Panc1 (cell line): ENCODE measurements at regions of chr17 and their contacts with region 1.

Region 1: DNA sequence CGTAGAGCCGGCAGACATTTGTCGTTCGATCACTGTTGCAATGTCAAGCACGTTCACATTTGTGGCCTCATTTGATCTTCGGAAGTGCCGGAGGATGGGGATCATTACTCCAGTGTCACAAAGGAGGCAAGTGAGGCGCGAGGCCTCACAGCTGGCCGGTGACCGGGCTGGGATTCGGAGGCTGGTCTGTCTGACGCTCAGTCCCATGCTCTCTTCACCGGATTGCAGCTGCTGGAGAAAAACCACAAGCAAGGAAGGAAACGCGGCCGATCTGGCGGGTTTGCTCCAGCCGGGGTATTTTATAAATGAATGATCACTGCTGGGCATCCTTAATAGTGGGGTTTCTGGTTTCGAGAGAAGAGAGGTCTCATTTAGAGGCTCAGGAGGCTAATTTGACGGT is 127.8 kb downstream of the OR1D5 start:
- DNase-seq: no peak
- ATAC-seq: no peak
- H3K4me3 ChIP-seq: no peak overlapping the region
- H3K27ac ChIP-seq: no peak overlapping the region
- H3K4me1 ChIP-seq: no peaks in the 10 kb centered on the region
- H3K27me3 ChIP-seq: no peaks in the 10 kb centered on the region
- CTCF ChIP-seq: no peak

Region 2: DNA sequence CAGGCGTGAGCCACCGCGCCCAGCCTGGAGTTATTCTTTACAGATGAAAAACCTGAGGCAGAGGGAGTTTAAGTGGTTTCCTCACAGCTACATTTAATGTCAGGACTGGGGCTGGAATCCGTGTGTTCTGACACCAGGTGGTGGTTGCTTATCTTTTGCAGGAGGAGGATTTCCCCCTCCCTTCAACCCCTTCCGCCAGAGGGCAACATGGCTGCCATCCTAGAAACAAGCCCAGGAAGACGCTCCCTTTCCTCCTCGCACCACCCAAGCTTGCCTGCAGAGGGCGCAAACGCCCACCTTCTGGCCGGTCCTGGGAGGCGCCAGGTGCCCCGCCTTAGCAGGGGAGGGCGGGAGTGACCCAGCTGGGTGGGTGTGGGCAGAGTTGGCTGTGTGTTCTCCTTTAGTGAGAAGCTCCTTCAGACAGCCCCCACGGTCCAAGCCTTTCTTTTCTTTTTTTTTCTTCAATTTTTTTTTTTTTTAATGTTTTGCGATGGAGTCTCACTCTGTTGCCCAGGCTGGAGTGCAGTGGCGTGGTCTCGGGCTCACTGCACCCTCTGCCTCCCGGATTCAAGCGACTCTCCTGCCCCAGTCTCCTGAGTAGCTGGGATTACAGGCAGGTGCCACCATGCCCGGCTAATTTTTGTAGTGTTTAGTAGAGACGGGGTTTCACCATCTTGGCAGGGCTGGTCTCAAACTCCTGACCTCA is 149.3 kb before region 1 on chr17:
- CTCF ChIA-PET with region 1: no interaction called
- POLR2A ChIA-PET with region 1: no interaction called
- in situ Hi-C with region 1: no loop called
- intact Hi-C with region 1: no loop called
- DNase-seq: peak; percentile 85
- ATAC-seq: peak; percentile 97
- H3K4me3 ChIP-seq: peak overlapping the region in 1 of 2 experiments; percentile 6; a peak in 1 of 4 replicates
- H3K27ac ChIP-seq: no peak overlapping the region
- H3K4me1 ChIP-seq: no peaks in the 10 kb centered on the region
- H3K27me3 ChIP-seq: no peaks in the 10 kb centered on the region
- CTCF ChIP-seq: peak; percentile 96

Region 3: GRCh38 chr17:2874189-2874686 is 61.4 kb before region 1 on chr17:
- CTCF ChIA-PET with region 1: no interaction called
- POLR2A ChIA-PET with region 1: no interaction called
- in situ Hi-C with region 1: no loop called
- intact Hi-C with region 1: no loop called
- DNase-seq: no peak
- ATAC-seq: no peak
- H3K4me3 ChIP-seq: no peak overlapping the region
- H3K27ac ChIP-seq: no peak overlapping the region
- H3K4me1 ChIP-seq: no peaks in the 10 kb centered on the region
- H3K27me3 ChIP-seq: no peaks in the 10 kb centered on the region
- CTCF ChIP-seq: no peak

Region 4: GRCh38 chr17:2892305-2892971 is 43.2 kb before region 1 on chr17:
- CTCF ChIA-PET with region 1: no interaction called
- POLR2A ChIA-PET with region 1: no interaction called
- in situ Hi-C with region 1: no loop called
- intact Hi-C with region 1: no loop called
- DNase-seq: peak; percentile 91
- ATAC-seq: peak; percentile 91
- H3K4me3 ChIP-seq: no peak overlapping the region
- H3K27ac ChIP-seq: no peak overlapping the region
- H3K4me1 ChIP-seq: peaks cover 5% of the 10 kb centered on the region; the same call in 1 of the 2 replicates
- H3K27me3 ChIP-seq: no peaks in the 10 kb centered on the region
- CTCF ChIP-seq: no peak

Region 5: GRCh38 chr17:2916461-2916860 is 19.2 kb before region 1 on chr17:
- CTCF ChIA-PET with region 1: interaction called, 16 read pairs
- POLR2A ChIA-PET with region 1: interaction called, 3 read pairs
- in situ Hi-C with region 1: no loop called
- intact Hi-C with region 1: no loop called
- DNase-seq: no peak
- ATAC-seq: no peak
- H3K4me3 ChIP-seq: no peak overlapping the region
- H3K27ac ChIP-seq: no peak overlapping the region
- H3K4me1 ChIP-seq: no peaks in the 10 kb centered on the region
- H3K27me3 ChIP-seq: no peaks in the 10 kb centered on the region
- CTCF ChIP-seq: no peak

Region 6: GRCh38 chr17:2990396-2990795 is 54.8 kb after region 1 on chr17:
- CTCF ChIA-PET with region 1: no interaction called
- POLR2A ChIA-PET with region 1: no interaction called
- in situ Hi-C with region 1: no loop called
- intact Hi-C with region 1: no loop called
- DNase-seq: no peak
- ATAC-seq: no peak
- H3K4me3 ChIP-seq: no peak overlapping the region
- H3K27ac ChIP-seq: no peak overlapping the region
- H3K4me1 ChIP-seq: no peaks in the 10 kb centered on the region
- H3K27me3 ChIP-seq: no peaks in the 10 kb centered on the region
- CTCF ChIP-seq: no peak